ENCODE measurements at regions of chr12 and their contacts with region 1.

Region 1: GRCh38 chr12:29241821-29242591 is 92.9 kb downstream of the FAR2 start:
- DNase-seq: peak; percentile 80
- ATAC-seq: peak; percentile 92
- H3K4me3 ChIP-seq: no peak overlapping the region
- H3K27ac ChIP-seq: no peak overlapping the region
- H3K4me1 ChIP-seq: peaks cover 6% of the 10 kb centered on the region
- H3K27me3 ChIP-seq: no peaks in the 10 kb centered on the region
- CTCF ChIP-seq: no peak
- POLR2A ChIP-seq: no peak
- RAD21 ChIP-seq: no peak

Region 2: DNA sequence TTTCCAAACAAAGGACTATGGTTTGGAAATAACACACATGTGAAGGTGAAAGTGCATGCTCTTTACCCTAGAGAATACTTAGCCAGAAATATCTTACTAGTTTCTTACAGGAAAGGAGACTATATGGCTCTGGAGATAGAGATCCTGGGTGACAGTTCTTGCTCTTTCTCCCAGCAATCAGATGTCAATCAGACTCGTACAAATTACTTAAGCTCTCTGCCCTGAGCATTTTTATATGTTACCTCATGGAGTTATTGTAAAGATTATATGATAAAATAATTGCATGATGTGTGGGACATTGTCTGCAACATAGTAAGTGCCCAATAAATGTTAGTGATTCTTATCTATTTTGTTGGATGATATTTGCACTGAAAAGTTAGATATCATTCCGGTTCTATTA is 16.2 kb before region 1 on chr12:
- CTCF ChIA-PET with region 1: interaction called, 4 read pairs
- POLR2A ChIA-PET with region 1: no interaction called
- dilution Hi-C with region 1: no loop called
- in situ Hi-C with region 1: no loop called
- intact Hi-C with region 1: loop called (anchors 1 kb)
- DNase-seq: no peak
- ATAC-seq: no peak
- H3K4me3 ChIP-seq: no peak overlapping the region
- H3K27ac ChIP-seq: no peak overlapping the region
- H3K4me1 ChIP-seq: peaks cover 7% of the 10 kb centered on the region
- H3K27me3 ChIP-seq: no peaks in the 10 kb centered on the region
- CTCF ChIP-seq: no peak
- POLR2A ChIP-seq: no peak
- RAD21 ChIP-seq: no peak

Region 3: GRCh38 chr12:29499235-29499634 is 257.2 kb after region 1 on chr12:
- CTCF ChIA-PET with region 1: no interaction called
- POLR2A ChIA-PET with region 1: no interaction called
- dilution Hi-C with region 1: no loop called
- in situ Hi-C with region 1: no loop called
- intact Hi-C with region 1: no loop called
- DNase-seq: no peak
- ATAC-seq: no peak
- H3K4me3 ChIP-seq: no peak overlapping the region
- H3K27ac ChIP-seq: no peak overlapping the region
- H3K4me1 ChIP-seq: no peaks in the 10 kb centered on the region
- H3K27me3 ChIP-seq: no peaks in the 10 kb centered on the region
- CTCF ChIP-seq: no peak
- POLR2A ChIP-seq: no peak
- RAD21 ChIP-seq: no peak